ENCODE measurements at regions of chr4 and their contacts with region 1.

Region 1: GRCh38 chr4:64625438-64625837 is 216.2 kb upstream of the TECRL start:
- DNase-seq: no peak
- ATAC-seq: no peak
- H3K4me3 ChIP-seq: no peak overlapping the region
- H3K27ac ChIP-seq: no peak overlapping the region
- H3K4me1 ChIP-seq: no peaks in the 10 kb centered on the region
- H3K27me3 ChIP-seq: no peaks in the 10 kb centered on the region
- CTCF ChIP-seq: no peak

Region 2: GRCh38 chr4:63717384-63717783 is 908.1 kb before region 1 on chr4:
- intact Hi-C with region 1: loop called in 1 of 10 experiments (anchors 5 kb)
- DNase-seq: no peak
- ATAC-seq: no peak
- H3K4me3 ChIP-seq: no peak overlapping the region
- H3K27ac ChIP-seq: no peak overlapping the region
- H3K4me1 ChIP-seq: no peaks in the 10 kb centered on the region
- H3K27me3 ChIP-seq: no peaks in the 10 kb centered on the region
- CTCF ChIP-seq: peak in 1 of 9 donors; percentile 9

Region 3: DNA sequence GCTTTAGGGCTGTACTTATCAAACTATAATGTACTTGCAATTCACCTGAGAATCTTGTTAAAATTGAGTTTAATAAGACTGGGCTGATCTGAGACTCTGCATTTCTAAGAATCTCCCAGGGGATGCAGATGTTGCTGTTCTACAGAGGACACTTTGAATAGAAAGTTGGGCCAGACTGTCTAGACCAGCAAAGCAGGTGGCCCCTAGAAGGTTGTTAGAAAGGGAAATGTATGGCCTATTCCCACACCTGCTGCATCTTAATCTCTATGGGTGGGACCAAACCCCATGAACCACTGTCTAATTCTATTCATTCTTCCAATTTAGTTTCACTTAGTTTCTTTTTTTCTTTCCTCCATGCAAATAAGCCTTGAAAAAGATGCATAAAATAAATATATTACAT is 197.0 kb after region 1 on chr4:
- intact Hi-C with region 1: no loop called
- DNase-seq: no peak
- ATAC-seq: no peak
- H3K4me3 ChIP-seq: no peak overlapping the region
- H3K27ac ChIP-seq: no peak overlapping the region
- H3K4me1 ChIP-seq: no peaks in the 10 kb centered on the region
- H3K27me3 ChIP-seq: no peaks in the 10 kb centered on the region
- CTCF ChIP-seq: no peak

Measured in heart right ventricle (tissue), 16 donors.